ENCODE measurements at regions of chr7 and their contacts with region 1.

Region 1: GRCh38 chr7:77687747-77688144 is 8.5 kb upstream of the RSBN1L start:
- DNase-seq: peak in 1 of 35 experiments; percentile 23
- ATAC-seq: peak; percentile 43 to 79 (median 57)
- H3K4me3 ChIP-seq: no peak overlapping the region
- H3K4me3 Mint-ChIP-seq: peak overlapping the region in 1 of 3 donors; percentile 50
- H3K27ac ChIP-seq: peak overlapping the region; percentile 40
- H3K27ac Mint-ChIP-seq: peak overlapping the region; percentile 74 to 83
- H3K4me1 ChIP-seq: peaks cover 8 to 13% of the 10 kb centered on the region in 2 experiments
- H3K4me1 Mint-ChIP-seq: peaks cover 30 to 40% (median 35%) of the 10 kb centered on the region in 3 donors
- H3K27me3 ChIP-seq: no peaks in the 10 kb centered on the region
- H3K27me3 Mint-ChIP-seq: no peaks in the 10 kb centered on the region

Region 2: DNA sequence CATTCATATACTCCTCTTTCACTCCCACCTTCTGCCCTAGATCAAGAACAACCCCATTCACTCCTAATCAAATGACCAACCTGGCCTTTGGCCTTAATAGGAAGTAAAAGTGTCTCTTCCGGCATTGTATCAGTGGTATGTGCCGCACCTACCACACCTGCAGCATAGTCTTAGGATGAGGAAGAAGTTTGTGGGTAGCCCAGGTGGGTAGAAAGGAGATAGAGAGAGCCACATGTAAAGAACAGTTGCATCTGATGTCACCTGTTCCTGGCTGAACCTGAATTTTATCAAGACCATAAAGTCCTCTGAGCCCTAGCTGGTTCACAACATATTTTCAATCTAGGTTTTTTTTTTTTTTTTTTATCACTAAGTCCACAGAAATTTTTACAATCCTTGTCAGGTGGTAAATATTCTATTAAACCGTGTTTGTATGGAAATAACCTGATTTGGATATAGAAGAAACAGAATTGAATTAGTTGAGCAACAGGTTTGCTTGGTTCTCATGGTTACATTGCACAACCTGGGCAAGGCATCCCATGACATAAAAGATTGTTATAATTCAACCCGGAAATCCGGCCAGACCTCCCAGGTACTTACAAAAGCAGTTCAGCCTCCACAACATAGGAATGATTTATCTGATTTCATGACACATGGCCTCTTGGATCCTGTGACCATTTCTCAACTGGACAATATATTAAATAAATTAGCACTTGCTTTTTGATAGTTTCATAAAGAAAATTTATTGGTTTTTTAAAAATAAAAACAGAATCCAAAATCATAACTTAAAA is 205.9 kb before region 1 on chr7:
- CTCF ChIA-PET with region 1: no interaction called
- POLR2A ChIA-PET with region 1: no interaction called
- DNase-seq: peak in 1 of 35 experiments; percentile 8
- ATAC-seq: peak in 2 of 4 experiments; percentile 58 to 82
- H3K4me3 ChIP-seq: no peak overlapping the region
- H3K4me3 Mint-ChIP-seq: no peak overlapping the region
- H3K27ac ChIP-seq: no peak overlapping the region
- H3K27ac Mint-ChIP-seq: no peak overlapping the region
- H3K4me1 ChIP-seq: peaks cover 4% of the 10 kb centered on the region in 2 experiments
- H3K4me1 Mint-ChIP-seq: peaks cover 7 to 8% (median 8%) of the 10 kb centered on the region in 3 donors
- H3K27me3 ChIP-seq: no peaks in the 10 kb centered on the region
- H3K27me3 Mint-ChIP-seq: peaks cover 0 to 4% of the 10 kb centered on the region in 2 donors

Region 3: GRCh38 chr7:77740257-77740656 is 52.5 kb after region 1 on chr7:
- CTCF ChIA-PET with region 1: no interaction called
- POLR2A ChIA-PET with region 1: interaction called in 1 of 2 experiments, 10 read pairs
- DNase-seq: no peak
- ATAC-seq: no peak
- H3K4me3 ChIP-seq: no peak overlapping the region
- H3K4me3 Mint-ChIP-seq: no peak overlapping the region
- H3K27ac ChIP-seq: no peak overlapping the region
- H3K27ac Mint-ChIP-seq: no peak overlapping the region
- H3K4me1 ChIP-seq: no peaks in the 10 kb centered on the region
- H3K4me1 Mint-ChIP-seq: peaks cover 8 to 16% (median 16%) of the 10 kb centered on the region in 3 donors
- H3K27me3 ChIP-seq: no peaks in the 10 kb centered on the region
- H3K27me3 Mint-ChIP-seq: no peaks in the 10 kb centered on the region

Region 4: GRCh38 chr7:77877791-77878190 is 190.0 kb after region 1 on chr7:
- CTCF ChIA-PET with region 1: no interaction called
- POLR2A ChIA-PET with region 1: no interaction called
- DNase-seq: no peak
- ATAC-seq: no peak
- H3K4me3 ChIP-seq: no peak overlapping the region
- H3K4me3 Mint-ChIP-seq: no peak overlapping the region
- H3K27ac ChIP-seq: no peak overlapping the region
- H3K27ac Mint-ChIP-seq: no peak overlapping the region
- H3K4me1 ChIP-seq: peaks cover 0 to 3% of the 10 kb centered on the region in 2 experiments
- H3K4me1 Mint-ChIP-seq: peaks cover 40 to 53% (median 48%) of the 10 kb centered on the region in 3 donors
- H3K27me3 ChIP-seq: no peaks in the 10 kb centered on the region
- H3K27me3 Mint-ChIP-seq: no peaks in the 10 kb centered on the region